Heart right ventricle (tissue), 16 donors: ENCODE measurements at regions of chr6 and their contacts with region 1.

Region 1: DNA sequence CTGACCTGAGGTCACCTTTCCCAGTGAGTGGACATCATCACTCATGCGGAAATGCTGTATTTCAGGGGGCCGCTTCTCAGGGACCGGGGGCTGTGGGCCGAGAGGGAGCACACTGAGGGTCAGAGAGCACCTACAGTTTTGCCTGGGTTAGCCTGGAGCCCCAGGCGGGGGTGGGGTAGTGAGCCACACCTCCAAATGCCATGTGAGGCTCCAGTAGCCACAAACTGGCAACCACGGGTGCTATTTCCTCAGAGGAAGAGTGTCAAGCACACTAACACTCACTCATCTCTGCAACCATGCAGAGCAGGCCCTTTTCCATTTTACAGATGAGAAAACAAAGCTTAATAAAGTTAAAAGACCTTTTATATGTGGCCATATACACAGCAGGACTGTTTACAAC is 4.7 kb downstream of the EHMT2 start:
- DNase-seq: no peak
- ATAC-seq: no peak
- H3K4me3 ChIP-seq: no peak overlapping the region
- H3K27ac ChIP-seq: no peak overlapping the region
- H3K4me1 ChIP-seq: peaks cover 0 to 12% (median 7%) of the 10 kb centered on the region in 9 donors
- H3K27me3 ChIP-seq: no peaks in the 10 kb centered on the region
- CTCF ChIP-seq: no peak

Region 2: DNA sequence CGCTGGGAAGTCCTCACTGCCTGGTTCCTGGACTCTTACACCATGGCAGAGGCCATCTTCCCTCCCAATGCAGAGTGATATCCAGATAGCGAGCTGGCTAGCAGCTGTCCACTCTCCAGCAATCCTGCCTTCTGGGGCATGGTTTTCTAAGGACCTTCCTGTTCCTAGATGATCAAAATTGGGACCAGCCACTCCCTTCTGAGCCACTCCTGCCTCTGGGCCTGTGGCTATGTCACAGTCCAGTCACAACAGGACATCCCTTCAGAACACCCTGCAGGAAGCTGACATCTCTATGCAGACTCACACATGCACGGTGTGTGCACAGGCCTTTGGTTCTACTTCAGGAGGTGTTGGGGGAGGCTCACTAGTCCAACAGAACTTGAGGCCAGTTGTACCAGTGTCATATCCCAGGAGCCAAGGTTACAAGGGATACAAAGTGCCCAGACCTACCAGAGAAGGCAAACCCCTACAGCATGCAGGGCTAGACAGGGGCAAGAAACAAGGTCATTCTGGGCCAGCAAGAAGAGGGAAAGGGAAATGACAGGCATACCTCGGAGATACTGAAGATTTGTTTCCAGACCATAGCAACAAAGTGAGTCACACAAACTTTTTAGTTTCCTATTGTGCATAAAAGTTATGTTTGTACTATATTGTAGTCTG is 366.8 kb before region 1 on chr6:
- intact Hi-C with region 1: no loop called
- DNase-seq: no peak
- ATAC-seq: peak in 5 of 8 donors; percentile 20 to 62 (median 39)
- H3K4me3 ChIP-seq: no peak overlapping the region
- H3K27ac ChIP-seq: peak overlapping the region in 1 of 10 donors; percentile 46
- H3K4me1 ChIP-seq: peaks cover 0 to 12% (median 0%) of the 10 kb centered on the region in 9 donors
- H3K27me3 ChIP-seq: no peaks in the 10 kb centered on the region
- CTCF ChIP-seq: no peak

Region 3: GRCh38 chr6:31815025-31815838 is 77.6 kb before region 1 on chr6 and contains the starts of genes HSPA1A and HSPA1L:
- intact Hi-C with region 1: no loop called
- DNase-seq: peak; percentile 92 to 98
- ATAC-seq: peak; percentile 84 to 94 (median 90)
- H3K4me3 ChIP-seq: peak within 1 kb of the TSS; percentile 52 to 71 (median 64)
- H3K27ac ChIP-seq: peak within 1 kb of the TSS; percentile 95 to 100 (median 99)
- H3K4me1 ChIP-seq: peaks cover 7 to 43% (median 30%) of the 10 kb centered on the region in 9 donors
- H3K27me3 ChIP-seq: no peaks in the 10 kb centered on the region
- CTCF ChIP-seq: no peak
- total RNA-seq, gene HSPA1A: 202 to 679 (median 259) TPM
- total RNA-seq, gene HSPA1L: 1.1 to 2.9 (median 1.9) TPM

Region 4: DNA sequence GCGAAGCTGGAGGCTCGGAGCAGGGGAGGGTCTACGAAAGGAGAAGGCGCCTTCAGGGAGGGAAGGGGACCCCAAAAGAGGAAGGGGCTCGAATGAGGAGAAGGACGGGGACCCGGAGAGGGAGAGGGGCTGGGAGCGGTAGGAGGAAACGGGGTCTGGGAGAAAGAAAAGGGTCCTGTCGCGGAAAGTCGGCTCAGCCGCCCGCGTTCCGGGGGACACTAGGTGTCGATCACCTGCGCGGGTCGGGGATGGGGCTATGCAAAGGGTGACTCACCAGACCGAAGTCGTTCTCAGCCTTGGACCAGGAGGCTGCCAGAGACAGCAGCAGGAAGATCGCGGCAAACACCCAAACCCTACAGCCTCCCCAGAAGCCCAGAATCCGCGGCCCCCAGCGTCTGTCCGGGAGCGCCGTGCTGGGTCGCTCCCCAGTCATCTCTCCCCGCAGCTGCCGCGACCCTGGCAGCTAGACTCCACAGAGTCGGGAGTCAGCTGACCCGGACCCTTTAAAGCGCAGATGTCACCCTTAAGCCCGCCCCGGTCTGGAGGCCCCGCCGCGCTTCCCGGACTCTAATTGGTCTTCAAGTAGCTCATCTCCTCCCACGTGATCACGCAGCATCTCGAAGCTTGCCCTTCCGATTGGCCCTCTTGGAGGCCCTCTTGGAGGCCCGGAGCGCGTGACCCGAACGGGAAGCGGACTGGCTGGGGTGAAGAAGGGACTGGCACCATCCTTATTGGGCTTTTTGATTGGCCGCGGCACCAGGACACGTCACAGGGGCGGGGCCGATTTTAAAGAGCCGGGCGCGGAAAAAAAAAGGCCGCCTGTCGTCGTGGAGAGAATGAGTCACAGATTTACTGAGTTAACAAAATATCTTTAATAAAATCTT is 30.2 kb before region 1 on chr6 and contains the start of gene NEU1:
- intact Hi-C with region 1: loop called in 1 of 10 experiments (anchors 1 kb)
- DNase-seq: peak; percentile 99 to 100
- ATAC-seq: peak; percentile 97 to 99 (median 98)
- H3K4me3 ChIP-seq: peak within 1 kb of the TSS; percentile 65 to 93 (median 78)
- H3K27ac ChIP-seq: peak within 1 kb of the TSS; percentile 8 to 93 (median 84)
- H3K4me1 ChIP-seq: peaks cover 8 to 29% (median 21%) of the 10 kb centered on the region in 9 donors
- H3K27me3 ChIP-seq: no peaks in the 10 kb centered on the region
- CTCF ChIP-seq: no peak
- total RNA-seq, gene NEU1: 18.1 to 32.4 (median 22.3) TPM

Region 5: DNA sequence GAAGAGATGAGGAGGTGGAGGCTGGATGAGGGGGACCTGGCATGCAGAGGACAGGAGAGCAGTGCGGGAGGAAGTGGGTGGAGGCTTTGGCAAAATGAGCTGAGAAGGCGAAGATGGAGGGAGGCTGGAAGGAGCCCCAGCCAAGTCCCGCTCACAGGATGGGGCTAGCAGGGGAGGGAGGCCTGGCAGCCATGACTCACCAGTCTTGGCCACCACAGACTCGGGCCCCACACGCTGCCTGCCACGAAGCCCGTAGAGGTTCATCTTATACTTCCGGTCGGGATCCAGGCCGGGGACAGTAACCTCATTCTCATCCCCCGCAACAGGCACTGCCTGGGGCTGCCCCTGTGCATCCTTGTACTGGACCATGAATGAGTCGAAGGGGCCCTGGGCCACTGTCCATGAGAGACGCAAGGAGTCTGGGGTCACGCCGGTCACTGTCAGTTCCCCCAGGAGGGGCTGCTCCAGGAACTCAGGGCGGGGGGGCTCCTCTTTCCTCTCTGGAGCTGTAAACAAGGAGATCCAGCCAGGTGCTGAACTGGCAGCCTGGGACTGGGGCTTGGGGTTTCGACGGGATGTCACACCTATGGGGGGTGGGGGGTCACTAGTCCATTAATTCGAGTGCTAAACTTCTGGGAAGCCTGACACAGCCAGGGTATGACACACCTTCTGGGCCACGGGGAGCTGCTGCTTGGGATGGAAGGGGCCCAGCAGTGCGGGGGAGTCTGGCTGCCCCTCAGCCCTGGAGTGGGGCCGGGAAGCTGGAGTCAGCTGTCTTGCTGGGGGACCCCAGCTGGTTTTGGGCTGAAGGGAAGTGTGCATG is 188.6 kb after region 1 on chr6:
- intact Hi-C with region 1: no loop called
- DNase-seq: peak; percentile 44 to 64
- ATAC-seq: peak; percentile 39 to 71 (median 65)
- H3K4me3 ChIP-seq: no peak overlapping the region
- H3K27ac ChIP-seq: peak overlapping the region in 8 of 10 donors; percentile 36 to 78 (median 58)
- H3K4me1 ChIP-seq: peaks cover 1 to 44% (median 20%) of the 10 kb centered on the region in 9 donors
- H3K27me3 ChIP-seq: peaks cover 0 to 13% (median 1%) of the 10 kb centered on the region in 7 donors
- CTCF ChIP-seq: no peak

Region 6: GRCh38 chr6:32947552-32948465 is 1055.0 kb after region 1 on chr6:
- intact Hi-C with region 1: no loop called
- DNase-seq: no peak
- ATAC-seq: no peak
- H3K4me3 ChIP-seq: no peak overlapping the region
- H3K27ac ChIP-seq: peak overlapping the region in 1 of 10 donors; percentile 24
- H3K4me1 ChIP-seq: peaks cover 0 to 87% (median 9%) of the 10 kb centered on the region in 9 donors
- H3K27me3 ChIP-seq: no peaks in the 10 kb centered on the region
- CTCF ChIP-seq: peak in 6 of 9 donors; percentile 16 to 44 (median 28)